CD4-positive, alpha-beta memory T cell (primary cell): ENCODE measurements at regions of chr6 and their contacts with region 1.

Region 1: GRCh38 chr6:139124887-139125672 is 9.8 kb upstream of the HECA start:
- DNase-seq: peak; percentile 85 to 88 (median 86)
- H3K4me3 ChIP-seq: peak overlapping the region in 1 of 2 donors; percentile 34
- H3K4me3 Mint-ChIP-seq: peak overlapping the region; percentile 57 to 80 (median 71)
- H3K27ac ChIP-seq: peak overlapping the region; percentile 55
- H3K27ac Mint-ChIP-seq: peak overlapping the region; percentile 79 to 98 (median 94)
- H3K4me1 ChIP-seq: peaks cover 55% of the 10 kb centered on the region
- H3K4me1 Mint-ChIP-seq: peaks cover 43 to 63% (median 51%) of the 10 kb centered on the region in 4 donors
- H3K27me3 ChIP-seq: no peaks in the 10 kb centered on the region
- H3K27me3 Mint-ChIP-seq: no peaks in the 10 kb centered on the region

Region 2: DNA sequence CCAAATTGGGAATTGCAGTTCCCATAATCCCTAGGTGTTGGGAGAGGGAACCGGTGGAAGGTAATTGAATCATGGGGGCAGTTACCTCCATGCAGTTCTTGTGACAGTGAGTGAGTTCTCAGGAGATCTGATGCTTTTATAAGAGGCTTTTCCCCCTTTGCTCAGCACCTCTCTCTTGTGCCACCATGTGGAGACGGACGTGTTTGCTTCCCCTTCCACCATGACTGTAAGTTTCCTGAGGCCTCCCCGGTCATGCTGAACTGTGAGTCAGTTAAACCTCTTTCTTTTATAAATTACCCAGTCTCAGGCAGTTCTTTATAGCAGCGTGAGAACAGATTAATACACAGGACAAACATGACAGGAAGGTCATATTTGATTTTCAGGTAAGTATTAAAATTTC is 15.5 kb before region 1 on chr6:
- CTCF ChIA-PET with region 1: interaction called, 40 read pairs
- POLR2A ChIA-PET with region 1: interaction called, 90 read pairs
- intact Hi-C with region 1: loop called (anchors 1 kb)
- DNase-seq: peak in 4 of 5 donors; percentile 11 to 30 (median 21)
- H3K4me3 ChIP-seq: no peak overlapping the region
- H3K4me3 Mint-ChIP-seq: peak overlapping the region in 2 of 8 donors; percentile 13 to 39
- H3K27ac ChIP-seq: no peak overlapping the region
- H3K27ac Mint-ChIP-seq: peak overlapping the region; percentile 3 to 87 (median 44)
- H3K4me1 ChIP-seq: peaks cover 50% of the 10 kb centered on the region
- H3K4me1 Mint-ChIP-seq: peaks cover 38 to 59% (median 51%) of the 10 kb centered on the region in 4 donors
- H3K27me3 ChIP-seq: no peaks in the 10 kb centered on the region
- H3K27me3 Mint-ChIP-seq: no peaks in the 10 kb centered on the region

Region 3: GRCh38 chr6:139161817-139162284 is 36.8 kb after region 1 on chr6:
- CTCF ChIA-PET with region 1: interaction called, 9 read pairs
- POLR2A ChIA-PET with region 1: interaction called, 50 read pairs
- intact Hi-C with region 1: loop called (anchors 1 kb)
- DNase-seq: peak; percentile 62 to 87 (median 69)
- H3K4me3 ChIP-seq: peak overlapping the region in 1 of 2 donors; percentile 12
- H3K4me3 Mint-ChIP-seq: peak overlapping the region; percentile 76 to 91 (median 83)
- H3K27ac ChIP-seq: peak overlapping the region; percentile 56
- H3K27ac Mint-ChIP-seq: peak overlapping the region; percentile 86 to 98 (median 95)
- H3K4me1 ChIP-seq: peaks cover 100% of the 10 kb centered on the region
- H3K4me1 Mint-ChIP-seq: peaks cover 73 to 97% (median 85%) of the 10 kb centered on the region in 4 donors
- H3K27me3 ChIP-seq: no peaks in the 10 kb centered on the region
- H3K27me3 Mint-ChIP-seq: no peaks in the 10 kb centered on the region

Region 4: GRCh38 chr6:139173172-139173571 is 48.1 kb after region 1 on chr6:
- CTCF ChIA-PET with region 1: interaction called, 15 read pairs
- POLR2A ChIA-PET with region 1: interaction called, 11 read pairs
- intact Hi-C with region 1: loop called (anchors 1 kb)
- DNase-seq: peak in 3 of 5 donors; percentile 24 to 61 (median 25)
- H3K4me3 ChIP-seq: no peak overlapping the region
- H3K4me3 Mint-ChIP-seq: peak overlapping the region in 7 of 8 donors; percentile 20 to 69 (median 53)
- H3K27ac ChIP-seq: no peak overlapping the region
- H3K27ac Mint-ChIP-seq: peak overlapping the region; percentile 29 to 88 (median 77)
- H3K4me1 ChIP-seq: peaks cover 97% of the 10 kb centered on the region
- H3K4me1 Mint-ChIP-seq: peaks cover 81 to 93% (median 89%) of the 10 kb centered on the region in 4 donors
- H3K27me3 ChIP-seq: no peaks in the 10 kb centered on the region
- H3K27me3 Mint-ChIP-seq: no peaks in the 10 kb centered on the region

Region 5: GRCh38 chr6:139256087-139256486 is 131.0 kb after region 1 on chr6:
- CTCF ChIA-PET with region 1: interaction called, 10 read pairs
- POLR2A ChIA-PET with region 1: interaction called, 5 read pairs
- intact Hi-C with region 1: no loop called
- DNase-seq: no peak
- H3K4me3 ChIP-seq: no peak overlapping the region
- H3K4me3 Mint-ChIP-seq: peak overlapping the region in 1 of 8 donors; percentile 17
- H3K27ac ChIP-seq: no peak overlapping the region
- H3K27ac Mint-ChIP-seq: peak overlapping the region in 6 of 7 donors; percentile 62 to 94 (median 82)
- H3K4me1 ChIP-seq: peaks cover 55% of the 10 kb centered on the region
- H3K4me1 Mint-ChIP-seq: peaks cover 46 to 61% (median 50%) of the 10 kb centered on the region in 4 donors
- H3K27me3 ChIP-seq: no peaks in the 10 kb centered on the region
- H3K27me3 Mint-ChIP-seq: no peaks in the 10 kb centered on the region

Region 6: DNA sequence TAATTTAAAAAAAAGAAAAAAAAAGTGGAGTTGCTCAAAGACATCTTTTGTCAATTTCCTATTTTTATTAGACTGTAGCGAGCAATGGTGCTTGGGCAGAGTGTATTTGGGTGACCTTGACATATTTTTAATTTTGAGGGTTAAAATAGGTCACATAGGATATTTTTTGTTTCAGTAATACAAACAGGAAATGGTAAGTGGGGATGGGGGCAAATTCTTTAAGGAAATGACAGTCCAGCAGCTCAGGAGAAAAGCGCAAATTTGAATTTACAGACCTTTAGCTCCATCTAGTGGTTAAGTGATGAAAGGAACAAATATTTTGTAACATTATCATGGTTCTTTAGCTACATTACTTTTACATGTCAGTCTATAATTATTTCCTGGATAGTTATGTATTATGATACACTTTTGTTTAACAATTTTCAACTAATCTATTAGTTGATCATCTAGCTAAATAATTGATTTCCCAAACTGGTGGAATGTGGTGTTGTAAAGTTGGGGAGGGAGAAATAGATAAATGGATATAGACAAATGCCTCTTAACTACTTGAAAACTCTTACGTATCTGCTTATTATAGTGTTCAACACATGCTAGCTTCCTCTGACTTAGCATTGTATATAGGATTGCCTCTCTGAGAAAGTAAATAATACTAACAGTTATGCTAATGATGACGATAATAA is 239.4 kb after region 1 on chr6:
- CTCF ChIA-PET with region 1: interaction called, 50 read pairs
- POLR2A ChIA-PET with region 1: interaction called, 18 read pairs
- intact Hi-C with region 1: loop called (anchors 1 kb)
- DNase-seq: peak in 4 of 5 donors; percentile 66 to 74 (median 68)
- H3K4me3 ChIP-seq: no peak overlapping the region
- H3K4me3 Mint-ChIP-seq: peak overlapping the region in 7 of 8 donors; percentile 27 to 64 (median 36)
- H3K27ac ChIP-seq: no peak overlapping the region
- H3K27ac Mint-ChIP-seq: peak overlapping the region in 6 of 7 donors; percentile 2 to 82 (median 62)
- H3K4me1 ChIP-seq: peaks cover 20% of the 10 kb centered on the region
- H3K4me1 Mint-ChIP-seq: peaks cover 28 to 45% (median 33%) of the 10 kb centered on the region in 4 donors
- H3K27me3 ChIP-seq: no peaks in the 10 kb centered on the region
- H3K27me3 Mint-ChIP-seq: no peaks in the 10 kb centered on the region